ENCODE measurements at regions of chr5 and their contacts with region 1.

Region 1: DNA sequence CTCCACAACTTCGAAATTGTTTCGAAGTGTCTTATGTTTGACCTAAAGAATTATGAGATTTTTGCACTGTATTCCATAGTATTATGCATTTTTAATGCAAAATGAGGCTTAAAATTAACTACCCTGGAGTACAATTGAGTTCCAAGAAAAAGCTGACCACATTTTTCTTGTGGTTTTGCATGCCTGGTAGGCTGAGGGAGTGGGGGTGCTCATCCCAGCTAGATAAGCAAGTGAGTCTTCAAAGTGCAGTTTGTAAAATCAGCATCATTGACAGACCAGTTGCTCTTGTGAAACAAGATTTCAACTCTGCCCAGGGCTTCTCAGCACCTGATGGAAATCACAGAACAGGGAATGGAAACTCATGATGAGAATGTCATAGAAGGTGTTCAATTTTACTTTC is 17.0 kb upstream of the NDUFS4 start:
- DNase-seq: no peak

Region 2: GRCh38 chr5:53291047-53291927 is 252.1 kb before region 1 on chr5:
- intact Hi-C with region 1: no loop called
- DNase-seq: no peak

Region 3: GRCh38 chr5:53520813-53521212 is 22.6 kb before region 1 on chr5:
- intact Hi-C with region 1: loop called in 1 of 2 experiments (anchors 1 kb)
- DNase-seq: no peak

Region 4: DNA sequence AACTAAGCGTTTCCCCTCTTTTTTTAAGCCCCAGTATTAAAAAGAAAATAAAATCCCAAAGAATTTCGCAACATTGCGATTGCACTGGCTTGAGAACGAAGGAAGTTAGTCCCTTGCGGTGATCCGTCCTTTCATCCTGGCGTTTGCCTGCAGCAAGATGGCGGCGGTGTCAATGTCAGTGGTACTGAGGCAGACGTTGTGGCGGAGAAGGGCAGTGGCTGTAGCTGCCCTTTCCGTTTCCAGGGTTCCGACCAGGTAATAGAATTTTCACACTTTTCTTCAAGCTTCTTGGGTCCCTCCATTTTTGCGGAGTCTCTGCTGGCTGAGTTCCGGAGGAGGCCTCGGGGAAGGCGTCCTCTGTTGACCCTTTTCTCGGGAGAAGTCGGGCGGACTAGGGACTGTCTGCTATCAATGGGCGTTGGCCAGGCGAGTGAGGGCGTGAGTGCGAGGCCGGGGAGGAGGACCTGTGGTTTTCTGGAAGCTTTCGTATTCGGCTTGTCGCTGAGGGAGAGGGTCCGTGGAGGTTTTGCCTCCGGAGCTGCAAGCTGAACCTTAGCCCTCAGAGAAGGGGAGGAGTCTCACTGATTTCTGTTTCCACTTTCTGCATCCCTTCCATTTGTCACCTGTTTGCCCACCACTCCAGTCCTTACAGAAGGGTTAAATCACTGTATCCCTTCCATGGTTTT is 17.2 kb after region 1 on chr5 and contains the start of gene NDUFS4:
- intact Hi-C with region 1: no loop called
- DNase-seq: peak; percentile 90
- total RNA-seq, gene NDUFS4: 74.4 to 79.4 TPM

Region 5: GRCh38 chr5:53578854-53579253 is 35.5 kb after region 1 on chr5:
- intact Hi-C with region 1: no loop called
- DNase-seq: no peak